ENCODE measurements at regions of chr2 and their contacts with region 1.

Region 1: GRCh38 chr2:8681786-8682692 is at the start of gene ID2:
- DNase-seq: peak; percentile 99
- H3K4me3 Mint-ChIP-seq: peak within 1 kb of the TSS; percentile 98
- H3K27ac Mint-ChIP-seq: peak within 1 kb of the TSS; percentile 95
- H3K4me1 Mint-ChIP-seq: peaks cover 35% of the 10 kb centered on the region
- H3K27me3 Mint-ChIP-seq: peaks cover 15% of the 10 kb centered on the region
- total RNA-seq, gene ID2: 182 to 193 TPM

Region 2: DNA sequence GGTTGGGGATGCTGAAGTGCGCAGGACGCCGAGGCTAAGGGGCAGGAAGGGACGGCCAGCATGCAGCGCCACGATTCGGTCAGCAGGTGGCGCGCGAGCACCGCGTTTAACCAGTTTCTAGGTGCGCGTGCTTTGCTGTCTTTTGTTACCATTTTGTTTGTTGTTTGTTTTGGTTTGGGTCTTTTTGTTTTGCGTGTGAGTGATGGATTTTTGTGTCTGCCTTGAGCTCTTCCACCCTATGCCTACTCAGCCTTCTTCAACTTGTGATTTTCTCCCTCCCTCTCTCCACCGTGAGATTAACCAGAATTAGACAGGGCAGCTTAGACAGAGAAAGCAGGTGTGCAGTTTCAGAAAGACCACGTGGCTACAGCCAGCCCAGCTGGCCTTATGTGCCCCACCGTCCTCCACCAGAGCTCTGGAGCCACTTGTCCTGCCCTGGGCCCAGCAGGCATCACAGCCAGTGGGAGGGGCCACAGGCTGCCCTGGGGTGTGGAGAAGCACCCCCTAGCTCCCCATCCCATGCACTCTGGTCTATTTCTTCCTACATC is 1584.6 kb before region 1 on chr2:
- CTCF ChIA-PET with region 1: no interaction called
- POLR2A ChIA-PET with region 1: no interaction called
- intact Hi-C with region 1: loop called (anchors 5 kb)
- DNase-seq: peak; percentile 82
- H3K4me3 Mint-ChIP-seq: no peak overlapping the region
- H3K27ac Mint-ChIP-seq: no peak overlapping the region
- H3K4me1 Mint-ChIP-seq: peaks cover 7% of the 10 kb centered on the region
- H3K27me3 Mint-ChIP-seq: no peaks in the 10 kb centered on the region

Region 3: DNA sequence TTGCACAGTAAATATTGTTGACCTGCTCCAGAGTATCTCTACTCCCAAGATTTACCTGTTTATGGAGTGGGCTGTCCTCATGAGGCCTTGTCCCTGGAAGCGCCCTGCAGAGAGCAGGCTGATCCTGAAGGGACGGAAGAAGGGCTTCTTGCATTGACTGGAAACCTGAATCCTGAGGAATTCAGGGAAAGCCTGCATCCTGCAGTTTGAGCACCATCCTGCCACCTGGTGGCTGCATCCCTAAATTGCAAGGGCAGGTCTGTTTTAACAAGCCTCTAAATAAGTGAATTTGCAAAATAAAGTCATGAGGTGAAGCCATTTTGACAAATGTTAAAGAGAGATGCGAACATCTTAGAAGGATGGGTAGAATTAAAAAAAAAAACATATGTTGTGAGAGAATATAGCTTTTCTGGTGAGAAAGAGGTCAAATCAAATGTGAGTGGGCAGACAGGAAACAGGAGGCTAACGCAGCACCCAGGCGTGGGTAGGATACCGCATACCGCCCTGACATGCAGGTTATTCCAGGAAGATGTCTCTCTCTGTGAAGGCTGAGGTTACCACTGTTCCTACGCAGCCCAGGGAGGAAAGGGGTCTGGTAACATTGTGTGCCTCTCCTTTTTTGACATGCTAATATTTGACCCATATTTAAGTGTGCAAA is 1009.9 kb before region 1 on chr2:
- CTCF ChIA-PET with region 1: interaction called, 3 read pairs
- POLR2A ChIA-PET with region 1: no interaction called
- intact Hi-C with region 1: loop called (anchors 5 kb)
- DNase-seq: peak; percentile 78
- H3K4me3 Mint-ChIP-seq: peak overlapping the region; percentile 45
- H3K27ac Mint-ChIP-seq: peak overlapping the region; percentile 88
- H3K4me1 Mint-ChIP-seq: peaks cover 43% of the 10 kb centered on the region
- H3K27me3 Mint-ChIP-seq: no peaks in the 10 kb centered on the region

Region 4: DNA sequence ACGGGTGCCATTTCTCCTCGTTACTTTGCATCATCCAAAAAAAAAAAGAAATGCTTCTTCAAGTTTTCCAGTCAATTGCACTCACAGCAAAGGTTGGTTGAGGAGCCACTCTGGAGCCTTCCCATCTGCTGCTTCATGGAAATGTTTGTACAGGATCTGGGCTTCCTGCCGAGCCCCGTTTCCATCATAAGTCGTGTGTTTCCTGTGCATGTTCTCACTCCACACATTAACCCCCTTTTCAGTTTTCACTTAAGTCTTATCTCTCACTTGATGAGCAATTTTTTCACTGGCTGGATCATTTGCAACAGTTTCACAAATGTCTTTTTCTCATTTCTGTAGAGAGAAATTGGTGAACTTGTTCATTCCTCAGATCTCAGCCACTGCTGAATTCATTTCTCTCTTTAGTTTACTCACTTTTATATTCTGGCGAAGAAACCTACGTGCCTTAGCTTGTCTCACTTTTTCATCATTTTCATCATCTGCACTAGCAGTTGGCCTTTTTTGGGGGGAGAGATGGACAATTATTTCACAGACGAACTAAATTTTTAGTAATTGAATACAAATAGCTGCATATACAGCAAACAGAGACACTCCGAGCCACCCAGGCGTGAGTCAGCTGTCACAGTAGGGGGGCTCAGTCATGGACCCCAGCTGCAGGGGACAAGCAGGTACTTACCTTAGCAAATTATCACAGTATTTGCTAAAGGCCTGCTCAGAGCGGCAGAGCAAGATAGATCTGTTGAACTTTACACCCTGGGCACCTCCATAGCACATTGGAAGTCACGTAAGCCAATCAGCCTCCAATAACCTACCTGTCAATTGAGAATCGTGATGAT is 751.0 kb before region 1 on chr2:
- CTCF ChIA-PET with region 1: no interaction called
- POLR2A ChIA-PET with region 1: no interaction called
- intact Hi-C with region 1: loop called (anchors 5 kb)
- DNase-seq: peak; percentile 62
- H3K4me3 Mint-ChIP-seq: peak overlapping the region; percentile 1
- H3K27ac Mint-ChIP-seq: peak overlapping the region; percentile 88
- H3K4me1 Mint-ChIP-seq: peaks cover 31% of the 10 kb centered on the region
- H3K27me3 Mint-ChIP-seq: peaks cover 3% of the 10 kb centered on the region

Region 5: DNA sequence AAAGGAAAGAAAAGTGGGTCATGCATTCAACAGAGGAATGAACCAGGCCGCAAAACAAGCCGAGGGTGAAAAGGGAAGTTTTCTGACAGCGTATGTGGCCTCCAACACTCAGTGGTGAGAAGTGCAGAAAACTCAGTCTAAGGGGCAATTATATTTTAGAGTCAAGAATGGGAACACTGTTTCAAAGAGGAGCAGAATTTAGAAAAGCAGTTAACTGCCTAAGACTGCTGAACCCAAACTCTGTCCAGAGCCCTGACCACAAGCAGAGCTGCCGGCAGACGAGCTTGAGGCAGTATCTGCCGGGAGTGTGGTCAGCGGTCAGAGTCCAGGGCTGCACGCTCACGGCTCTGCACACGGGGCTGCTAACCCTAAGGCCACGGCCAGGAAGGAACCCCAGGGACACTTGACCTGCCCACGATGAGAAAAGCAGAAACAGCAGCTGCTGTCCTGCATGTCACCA is 347.1 kb before region 1 on chr2:
- CTCF ChIA-PET with region 1: no interaction called
- POLR2A ChIA-PET with region 1: no interaction called
- intact Hi-C with region 1: loop called (anchors 10 kb)
- DNase-seq: no peak
- H3K4me3 Mint-ChIP-seq: no peak overlapping the region
- H3K27ac Mint-ChIP-seq: no peak overlapping the region
- H3K4me1 Mint-ChIP-seq: peaks cover 20% of the 10 kb centered on the region
- H3K27me3 Mint-ChIP-seq: no peaks in the 10 kb centered on the region

Region 6: DNA sequence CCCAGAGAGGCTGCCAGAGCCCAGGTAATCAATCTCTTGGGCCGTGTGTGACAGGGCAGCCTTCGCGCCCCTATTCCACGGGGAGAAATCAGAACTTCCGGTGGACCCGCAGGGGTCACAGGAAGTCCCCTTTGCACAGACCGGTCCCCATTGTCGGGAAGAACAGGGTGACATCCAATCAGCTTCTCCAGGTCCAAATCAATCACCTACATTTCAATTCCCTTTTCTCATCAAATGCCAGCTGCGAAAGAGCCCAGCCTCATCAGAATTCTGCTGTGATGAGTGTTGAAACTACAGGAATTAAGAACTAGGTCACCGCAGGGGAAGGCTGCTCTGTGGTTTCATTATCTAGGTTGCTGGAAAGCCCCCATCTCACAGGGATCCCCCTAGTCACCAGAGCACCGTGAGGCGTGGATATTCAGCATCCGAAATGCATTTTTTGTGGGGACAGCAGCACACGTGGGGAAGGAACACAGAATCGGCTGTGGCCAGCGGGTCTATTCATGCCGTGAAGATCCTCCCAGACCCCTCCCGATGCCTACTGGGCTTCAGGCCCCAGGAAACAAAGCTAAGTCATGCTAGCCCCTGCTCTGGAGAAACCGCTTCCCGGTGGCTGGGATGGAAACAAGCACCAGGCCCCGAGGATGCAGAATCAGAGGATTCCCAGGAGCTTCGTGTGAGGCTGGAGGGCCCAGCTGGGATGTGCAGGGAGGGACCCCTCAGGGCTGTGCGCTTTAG is 193.9 kb before region 1 on chr2:
- CTCF ChIA-PET with region 1: interaction called, 4 read pairs
- POLR2A ChIA-PET with region 1: interaction called, 40 read pairs
- intact Hi-C with region 1: loop called (anchors 1 kb)
- DNase-seq: peak; percentile 88
- H3K4me3 Mint-ChIP-seq: peak overlapping the region; percentile 77
- H3K27ac Mint-ChIP-seq: peak overlapping the region; percentile 91
- H3K4me1 Mint-ChIP-seq: peaks cover 72% of the 10 kb centered on the region
- H3K27me3 Mint-ChIP-seq: no peaks in the 10 kb centered on the region